Activated naive CD8-positive, alpha-beta T cell treated with anti-CD3 and anti-CD28 coated beads, Interleukin-2, amount 10 ng/mL, durations not matched to agents 7 days and 5 days (primary cell): ENCODE measurements at regions of chr4 and their contacts with region 1.

Region 1: GRCh38 chr4:42656944-42657792 is at the start of gene ATP8A1:
- DNase-seq: peak; percentile 97
- ATAC-seq: peak; percentile 83
- H3K4me3 Mint-ChIP-seq: peak within 1 kb of the TSS; percentile 96
- H3K27ac Mint-ChIP-seq: peak within 1 kb of the TSS; percentile 100
- H3K4me1 Mint-ChIP-seq: peaks cover 35% of the 10 kb centered on the region
- H3K27me3 Mint-ChIP-seq: peaks cover 2% of the 10 kb centered on the region
- total RNA-seq, gene ATP8A1: 55.3 to 56.3 TPM

Region 2: DNA sequence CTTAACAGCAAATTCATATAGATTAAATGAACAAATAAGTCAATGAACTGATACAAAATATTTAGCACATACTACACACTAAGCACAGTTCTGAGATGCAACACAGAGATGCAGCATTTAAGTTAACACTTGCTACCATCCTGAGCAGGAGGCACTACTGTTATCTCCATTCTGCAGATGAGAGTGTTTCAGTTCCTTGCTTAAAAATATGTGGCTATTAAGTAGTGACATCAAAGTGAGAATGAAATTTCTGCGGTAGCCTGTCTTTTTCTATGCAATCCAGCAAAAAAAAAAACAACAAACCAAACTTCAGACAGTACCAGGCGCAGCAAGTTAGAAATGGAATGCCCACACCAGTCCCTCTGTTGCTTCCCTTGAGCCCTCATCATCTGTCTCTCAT is 169.1 kb before region 1 on chr4:
- POLR2A ChIA-PET with region 1: no interaction called
- DNase-seq: no peak
- ATAC-seq: no peak
- H3K4me3 Mint-ChIP-seq: no peak overlapping the region
- H3K27ac Mint-ChIP-seq: no peak overlapping the region
- H3K4me1 Mint-ChIP-seq: no peaks in the 10 kb centered on the region
- H3K27me3 Mint-ChIP-seq: no peaks in the 10 kb centered on the region

Region 3: DNA sequence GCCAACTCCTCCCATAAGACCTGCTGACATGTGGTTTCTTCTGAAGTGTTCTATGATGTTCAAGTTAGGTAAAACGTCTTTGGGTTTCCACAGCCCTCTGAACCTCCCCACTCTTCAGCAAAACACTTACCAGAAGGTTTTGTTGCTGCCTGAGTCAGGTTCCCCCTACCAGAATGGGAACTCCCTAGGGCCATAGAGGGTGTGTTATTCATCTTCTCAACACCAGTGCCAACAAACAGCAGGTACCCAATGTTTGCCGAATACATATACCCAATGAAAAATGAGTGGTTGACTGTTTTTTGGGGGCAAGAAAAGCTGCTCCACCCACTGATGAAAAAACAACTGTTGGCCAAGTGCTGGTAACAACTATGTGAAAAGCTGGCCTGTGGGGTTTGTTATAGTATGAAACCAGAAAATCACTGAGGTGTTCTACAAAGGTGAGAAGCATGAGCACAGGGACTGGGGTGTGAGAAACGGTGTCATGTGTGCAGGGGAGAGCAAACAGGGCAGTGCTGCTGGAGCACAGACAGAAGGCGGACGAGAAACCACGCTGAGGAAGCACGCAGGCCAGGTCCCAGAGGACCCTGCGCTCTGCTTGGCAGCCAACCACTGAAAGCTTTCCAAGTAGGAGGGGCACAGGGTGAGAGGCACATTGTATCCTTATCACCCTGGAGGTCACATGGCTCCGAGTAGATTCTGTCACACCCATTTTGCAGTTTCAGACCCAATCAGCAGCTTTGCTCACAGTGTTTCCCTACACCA is 29.1 kb before region 1 on chr4:
- POLR2A ChIA-PET with region 1: interaction called, 12 read pairs
- DNase-seq: peak; percentile 45
- ATAC-seq: peak; percentile 85
- H3K4me3 Mint-ChIP-seq: peak overlapping the region; percentile 60
- H3K27ac Mint-ChIP-seq: peak overlapping the region; percentile 83
- H3K4me1 Mint-ChIP-seq: peaks cover 35% of the 10 kb centered on the region
- H3K27me3 Mint-ChIP-seq: no peaks in the 10 kb centered on the region

Region 4: GRCh38 chr4:42673082-42673425 is 15.9 kb after region 1 on chr4:
- POLR2A ChIA-PET with region 1: interaction called, 112 read pairs
- DNase-seq: no peak
- ATAC-seq: peak; percentile 40
- H3K4me3 Mint-ChIP-seq: peak overlapping the region; percentile 85
- H3K27ac Mint-ChIP-seq: peak overlapping the region; percentile 98
- H3K4me1 Mint-ChIP-seq: peaks cover 46% of the 10 kb centered on the region
- H3K27me3 Mint-ChIP-seq: no peaks in the 10 kb centered on the region

Region 5: GRCh38 chr4:42678512-42678911 is 21.3 kb after region 1 on chr4:
- POLR2A ChIA-PET with region 1: interaction called, 112 read pairs
- DNase-seq: no peak
- ATAC-seq: no peak
- H3K4me3 Mint-ChIP-seq: no peak overlapping the region
- H3K27ac Mint-ChIP-seq: no peak overlapping the region
- H3K4me1 Mint-ChIP-seq: peaks cover 24% of the 10 kb centered on the region
- H3K27me3 Mint-ChIP-seq: no peaks in the 10 kb centered on the region

Region 6: DNA sequence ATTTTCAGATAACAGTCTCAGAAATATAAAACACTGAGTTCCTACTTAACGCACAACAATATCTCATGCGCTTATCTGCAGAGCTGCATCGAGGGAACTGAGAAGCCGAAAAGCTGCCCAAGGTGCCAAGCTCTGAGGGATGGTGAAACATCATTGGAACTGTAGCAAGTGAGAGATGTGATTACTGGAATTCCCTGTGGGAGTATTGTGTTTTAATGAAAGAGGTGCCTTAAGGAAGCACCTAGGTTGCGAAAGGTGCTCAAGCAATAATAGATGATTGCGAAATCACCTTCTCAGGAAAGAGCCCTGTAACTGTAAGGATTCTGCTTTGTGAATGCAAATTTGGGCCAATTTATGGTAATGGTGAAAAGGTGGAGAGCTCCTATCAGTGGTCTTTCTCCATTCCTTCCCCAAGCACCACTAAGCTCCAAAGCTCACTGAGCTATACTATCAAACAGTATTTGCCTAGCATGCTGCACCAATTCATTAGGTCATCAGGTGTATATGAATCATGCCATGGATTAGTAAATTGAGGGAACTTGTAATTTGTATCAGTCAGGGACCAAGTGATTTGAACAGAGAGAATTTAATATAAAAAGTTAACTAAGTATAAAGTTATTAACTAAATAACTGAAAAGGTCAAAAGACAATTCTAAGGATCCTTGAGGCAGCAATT is 58.8 kb after region 1 on chr4:
- POLR2A ChIA-PET with region 1: interaction called, 13 read pairs
- DNase-seq: no peak
- ATAC-seq: no peak
- H3K4me3 Mint-ChIP-seq: no peak overlapping the region
- H3K27ac Mint-ChIP-seq: no peak overlapping the region
- H3K4me1 Mint-ChIP-seq: peaks cover 9% of the 10 kb centered on the region
- H3K27me3 Mint-ChIP-seq: peaks cover 3% of the 10 kb centered on the region